Uterus (tissue), 4 donors: ENCODE measurements at regions of chr11 and their contacts with region 1.

Region 1: DNA sequence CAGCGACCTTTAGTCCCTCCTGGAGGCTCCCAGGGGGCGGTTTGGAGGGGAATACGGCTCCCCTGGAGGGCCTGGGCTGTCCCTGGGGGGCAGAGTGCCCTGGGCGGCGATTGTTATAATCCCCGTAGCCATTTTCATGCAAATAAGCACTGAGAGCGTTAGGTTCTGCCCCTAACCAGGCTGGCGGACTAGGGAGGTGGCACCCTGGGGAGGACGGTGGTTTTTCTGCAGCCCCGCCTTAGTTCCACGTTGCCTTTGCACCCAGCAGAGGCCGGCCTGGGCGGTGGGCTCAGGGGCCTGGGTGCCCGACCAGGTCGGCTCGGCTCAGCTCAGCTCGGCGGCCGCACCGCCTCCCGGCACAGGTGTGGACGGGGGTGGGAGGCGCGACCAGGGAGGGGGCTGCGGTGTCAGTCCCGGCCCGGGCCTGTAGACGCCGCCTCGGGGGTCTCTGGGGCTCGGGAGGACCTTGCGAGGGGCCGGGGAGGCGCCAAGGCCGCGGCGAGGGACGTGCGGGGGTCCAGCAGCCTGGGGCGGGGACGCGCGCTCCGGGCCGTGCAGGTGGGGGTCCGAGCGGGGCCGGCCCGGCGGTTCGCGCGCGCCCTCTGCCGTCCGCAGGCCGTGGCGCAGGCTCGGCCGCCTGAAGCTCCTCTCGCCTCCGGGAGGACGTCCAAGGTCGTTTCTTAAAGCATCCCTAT is 2.3 kb upstream of the DUSP8 start:
- DNase-seq: peak; percentile 59 to 68
- H3K4me3 ChIP-seq: peak overlapping the region in 1 of 2 donors; percentile 33
- H3K27ac ChIP-seq: peak overlapping the region; percentile 12 to 67
- H3K4me1 ChIP-seq: peaks cover 0 to 31% of the 10 kb centered on the region in 2 donors
- H3K27me3 ChIP-seq: peaks cover 0 to 5% of the 10 kb centered on the region in 2 donors
- CTCF ChIP-seq: peak; percentile 54 to 98 (median 96)
- POLR2A ChIP-seq: peak in 1 of 2 donors; percentile 19

Region 2: DNA sequence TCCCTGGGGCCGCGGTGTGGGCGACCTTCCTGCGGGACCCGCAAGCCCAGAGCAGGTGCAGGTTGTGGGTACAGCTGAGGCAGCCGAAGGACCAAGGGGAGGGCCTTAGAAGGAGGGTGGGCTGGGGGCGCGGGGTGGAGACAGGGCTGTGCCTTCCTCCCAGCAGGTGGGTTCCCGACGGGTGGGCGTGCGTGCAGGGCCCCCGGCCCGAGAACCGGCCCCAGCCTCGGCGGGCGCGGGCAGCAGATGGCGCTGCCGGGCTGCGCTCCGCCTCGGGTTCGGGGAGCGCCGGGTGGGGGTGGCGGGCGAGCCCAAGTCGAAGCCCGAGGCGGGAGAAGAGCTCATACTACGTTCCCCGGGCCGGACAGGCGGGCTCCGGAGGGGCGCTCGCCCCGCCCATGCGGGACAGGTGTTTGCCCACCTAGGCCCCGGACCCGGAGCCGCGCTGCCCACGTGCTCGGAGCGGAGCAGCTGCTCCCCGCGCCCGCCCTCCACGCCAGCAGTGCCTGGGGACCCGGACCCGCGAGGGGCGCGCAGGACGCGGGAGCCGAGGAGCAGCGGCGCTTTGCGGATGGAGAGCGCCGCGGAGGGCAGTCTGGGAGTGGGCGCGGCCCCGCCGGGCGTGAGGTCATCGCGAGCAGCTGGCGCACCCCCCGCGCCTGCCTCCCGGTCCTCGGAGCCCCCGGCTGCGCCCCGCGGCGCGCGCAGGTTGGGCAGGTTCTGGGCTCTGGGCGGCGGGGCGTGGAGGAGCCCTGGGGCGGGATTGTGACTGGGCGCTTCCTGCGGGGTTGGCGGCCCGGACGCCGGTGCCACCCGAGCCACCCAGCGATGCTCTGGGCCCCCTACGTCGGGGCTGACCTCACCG is 27.6 kb before region 1 on chr11:
- intact Hi-C with region 1: loop called (anchors 2 kb)
- DNase-seq: peak in 1 of 2 donors; percentile 58
- H3K4me3 ChIP-seq: peak overlapping the region in 1 of 2 donors; percentile 24
- H3K27ac ChIP-seq: peak overlapping the region; percentile 55 to 61
- H3K4me1 ChIP-seq: peaks cover 0 to 16% of the 10 kb centered on the region in 2 donors
- H3K27me3 ChIP-seq: peaks cover 0 to 3% of the 10 kb centered on the region in 2 donors
- CTCF ChIP-seq: peak; percentile 54 to 90 (median 90)
- POLR2A ChIP-seq: peak in 1 of 2 donors; percentile 37